Caco-2 (cell line): ENCODE measurements at regions of chr5 and their contacts with region 1.

Region 1: GRCh38 chr5:69093771-69094482 is at the start of gene SLC30A5:
- DNase-seq: peak; percentile 99 to 100
- H3K4me3 ChIP-seq: peak within 1 kb of the TSS; percentile 92
- H3K4me3 Mint-ChIP-seq: peak within 1 kb of the TSS; percentile 88
- H3K27ac Mint-ChIP-seq: peak within 1 kb of the TSS; percentile 91
- H3K4me1 ChIP-seq: peaks cover 13% of the 10 kb centered on the region; the same call in 1 of the 2 replicates
- H3K4me1 Mint-ChIP-seq: no peaks in the 10 kb centered on the region
- H3K27me3 ChIP-seq: no peaks in the 10 kb centered on the region
- H3K27me3 Mint-ChIP-seq: no peaks in the 10 kb centered on the region
- CTCF ChIP-seq: peak; percentile 89 to 92
- total RNA-seq, gene SLC30A5: 61.7 and 64.5 TPM in 2 replicates

Region 2: DNA sequence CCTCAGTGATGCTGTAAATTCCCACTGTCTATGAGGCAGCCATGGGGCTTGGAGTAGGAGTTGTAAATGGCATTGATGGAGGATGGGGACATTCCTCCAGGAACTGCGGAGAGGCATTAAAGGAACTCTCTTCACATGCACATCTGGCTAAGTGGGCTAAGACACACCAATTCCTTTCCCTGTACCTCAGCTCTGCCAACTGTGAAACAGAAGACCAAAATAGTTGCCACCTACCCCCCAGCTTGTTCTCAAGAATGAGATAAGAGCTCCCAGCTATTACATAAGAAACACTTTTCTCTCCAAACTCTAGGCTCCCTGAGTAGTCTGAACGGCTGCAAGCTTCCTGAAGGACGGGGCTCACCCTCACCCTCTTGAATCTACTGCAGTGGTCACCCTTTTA is 144.7 kb before region 1 on chr5:
- CTCF ChIA-PET with region 1: no interaction called
- POLR2A ChIA-PET with region 1: no interaction called
- intact Hi-C with region 1: no loop called
- DNase-seq: no peak
- H3K4me3 ChIP-seq: no peak overlapping the region
- H3K4me3 Mint-ChIP-seq: no peak overlapping the region
- H3K27ac Mint-ChIP-seq: no peak overlapping the region
- H3K4me1 ChIP-seq: no peaks in the 10 kb centered on the region
- H3K4me1 Mint-ChIP-seq: no peaks in the 10 kb centered on the region
- H3K27me3 ChIP-seq: no peaks in the 10 kb centered on the region
- H3K27me3 Mint-ChIP-seq: peaks cover 6% of the 10 kb centered on the region
- CTCF ChIP-seq: no peak

Region 3: GRCh38 chr5:69042915-69043658 is 50.8 kb before region 1 on chr5:
- CTCF ChIA-PET with region 1: interaction called, 19 read pairs
- POLR2A ChIA-PET with region 1: interaction called, 3 read pairs
- intact Hi-C with region 1: no loop called
- DNase-seq: peak; percentile 80 to 81
- H3K4me3 ChIP-seq: peak overlapping the region; percentile 45
- H3K4me3 Mint-ChIP-seq: peak overlapping the region; percentile 89
- H3K27ac Mint-ChIP-seq: peak overlapping the region; percentile 71
- H3K4me1 ChIP-seq: peaks cover 6% of the 10 kb centered on the region; the same call in 1 of the 2 replicates
- H3K4me1 Mint-ChIP-seq: peaks cover 6% of the 10 kb centered on the region
- H3K27me3 ChIP-seq: no peaks in the 10 kb centered on the region
- H3K27me3 Mint-ChIP-seq: no peaks in the 10 kb centered on the region
- CTCF ChIP-seq: peak; percentile 74 to 82

Region 4: DNA sequence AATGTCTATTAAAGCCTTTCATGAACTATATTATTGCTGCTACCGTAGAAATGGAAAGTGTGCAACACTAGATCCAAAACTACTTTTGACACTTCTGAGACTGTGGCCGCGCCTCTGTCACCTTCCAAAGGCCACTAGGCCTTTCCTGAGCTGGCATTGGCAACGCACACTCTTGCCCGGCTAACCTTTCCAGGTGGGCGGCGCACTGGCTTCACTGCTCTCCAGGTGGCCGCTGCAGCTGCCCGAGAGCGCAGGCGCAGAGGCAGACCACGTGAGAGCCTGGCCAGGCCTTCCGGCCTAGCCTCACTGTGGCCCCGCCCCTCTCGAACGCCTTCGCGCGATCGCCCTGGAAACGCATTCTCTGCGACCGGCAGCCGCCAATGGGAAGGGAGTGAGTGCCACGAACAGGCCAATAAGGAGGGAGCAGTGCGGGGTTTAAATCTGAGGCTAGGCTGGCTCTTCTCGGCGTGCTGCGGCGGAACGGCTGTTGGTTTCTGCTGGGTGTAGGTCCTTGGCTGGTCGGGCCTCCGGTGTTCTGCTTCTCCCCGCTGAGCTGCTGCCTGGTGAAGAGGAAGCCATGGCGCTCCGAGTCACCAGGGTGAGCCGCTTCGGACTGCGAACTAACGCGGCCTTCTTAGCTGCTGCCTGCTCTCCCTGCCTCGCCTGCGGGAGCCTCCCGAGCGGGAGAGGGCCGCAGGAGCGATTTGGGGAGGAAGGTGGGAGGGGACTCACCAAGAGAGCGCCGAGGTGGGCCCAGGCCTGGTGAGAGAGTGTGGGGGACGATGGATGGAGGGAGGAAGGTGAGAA is 73.0 kb after region 1 on chr5 and contains the start of gene CCNB1:
- CTCF ChIA-PET with region 1: interaction called, 24 read pairs
- POLR2A ChIA-PET with region 1: interaction called, 15 read pairs
- intact Hi-C with region 1: loop called (anchors 1 kb)
- DNase-seq: peak; percentile 99
- H3K4me3 ChIP-seq: peak within 1 kb of the TSS; percentile 100
- H3K4me3 Mint-ChIP-seq: peak within 1 kb of the TSS; percentile 100
- H3K27ac Mint-ChIP-seq: peak within 1 kb of the TSS; percentile 100
- H3K4me1 ChIP-seq: peaks cover 8% of the 10 kb centered on the region; the same call in 1 of the 2 replicates
- H3K4me1 Mint-ChIP-seq: peaks cover 20% of the 10 kb centered on the region
- H3K27me3 ChIP-seq: no peaks in the 10 kb centered on the region
- H3K27me3 Mint-ChIP-seq: no peaks in the 10 kb centered on the region
- CTCF ChIP-seq: peak in 1 of 2 experiments; percentile 19
- total RNA-seq, gene CCNB1: 311 and 338 TPM in 2 replicates

Region 5: GRCh38 chr5:69234457-69235268 is 140.7 kb after region 1 on chr5 and contains the start of gene CDK7:
- CTCF ChIA-PET with region 1: interaction called, 12 read pairs
- POLR2A ChIA-PET with region 1: interaction called, 6 read pairs
- intact Hi-C with region 1: no loop called
- DNase-seq: peak; percentile 92 to 94
- H3K4me3 ChIP-seq: peak within 1 kb of the TSS; percentile 93
- H3K4me3 Mint-ChIP-seq: peak within 1 kb of the TSS; percentile 83
- H3K27ac Mint-ChIP-seq: peak within 1 kb of the TSS; percentile 77
- H3K4me1 ChIP-seq: peaks cover 14% of the 10 kb centered on the region
- H3K4me1 Mint-ChIP-seq: peaks cover 18% of the 10 kb centered on the region
- H3K27me3 ChIP-seq: no peaks in the 10 kb centered on the region
- H3K27me3 Mint-ChIP-seq: no peaks in the 10 kb centered on the region
- CTCF ChIP-seq: no peak
- total RNA-seq, gene CDK7: 82.4 and 90.5 TPM in 2 replicates

Region 6: GRCh38 chr5:69334793-69335268 is 240.9 kb after region 1 on chr5:
- CTCF ChIA-PET with region 1: interaction called, 29 read pairs
- POLR2A ChIA-PET with region 1: interaction called, 4 read pairs
- intact Hi-C with region 1: loop called (anchors 1 kb)
- DNase-seq: peak; percentile 91 to 92
- H3K4me3 ChIP-seq: no peak overlapping the region
- H3K4me3 Mint-ChIP-seq: peak overlapping the region; percentile 7
- H3K27ac Mint-ChIP-seq: peak overlapping the region; percentile 19
- H3K4me1 ChIP-seq: peaks cover 30% of the 10 kb centered on the region
- H3K4me1 Mint-ChIP-seq: peaks cover 26% of the 10 kb centered on the region
- H3K27me3 ChIP-seq: no peaks in the 10 kb centered on the region
- H3K27me3 Mint-ChIP-seq: no peaks in the 10 kb centered on the region
- CTCF ChIP-seq: peak; percentile 80 to 95

Region 7: GRCh38 chr5:69404659-69405330 is 310.9 kb after region 1 on chr5:
- CTCF ChIA-PET with region 1: interaction called, 11 read pairs
- POLR2A ChIA-PET with region 1: no interaction called
- intact Hi-C with region 1: no loop called
- DNase-seq: no peak
- H3K4me3 ChIP-seq: no peak overlapping the region
- H3K4me3 Mint-ChIP-seq: no peak overlapping the region
- H3K27ac Mint-ChIP-seq: no peak overlapping the region
- H3K4me1 ChIP-seq: no peaks in the 10 kb centered on the region
- H3K4me1 Mint-ChIP-seq: no peaks in the 10 kb centered on the region
- H3K27me3 ChIP-seq: no peaks in the 10 kb centered on the region
- H3K27me3 Mint-ChIP-seq: no peaks in the 10 kb centered on the region
- CTCF ChIP-seq: no peak